Mammary epithelial cell (primary cell): ENCODE measurements at regions of chr12 and their contacts with region 1.

Region 1: DNA sequence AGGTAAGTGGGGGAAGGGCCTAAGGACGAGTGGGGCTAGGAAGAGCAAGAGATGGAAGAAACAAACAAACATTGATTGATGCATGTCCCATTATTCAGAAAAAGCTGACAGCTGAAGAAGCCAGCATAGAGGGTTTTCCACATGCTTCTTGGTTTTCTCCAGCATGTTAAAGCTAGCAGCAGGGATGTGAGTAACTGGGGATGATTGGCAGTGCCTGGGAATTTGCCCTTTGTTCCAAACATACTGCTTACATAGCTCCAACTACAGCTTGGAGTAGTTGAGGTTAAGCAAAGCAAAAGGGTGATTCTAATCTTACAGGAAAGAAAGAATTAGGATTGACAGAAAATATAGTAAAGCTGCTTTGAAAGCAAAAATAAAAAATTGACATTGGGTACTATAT is 68.0 kb upstream of the IFNG-AS1 start:
- DNase-seq: peak; percentile 63
- H3K4me3 ChIP-seq: no peak overlapping the region
- H3K27ac ChIP-seq: peak overlapping the region; percentile 28
- H3K4me1 ChIP-seq: peaks cover 37% of the 10 kb centered on the region
- H3K27me3 ChIP-seq: no peaks in the 10 kb centered on the region
- CTCF ChIP-seq: no peak

Region 2: GRCh38 chr12:67633708-67634107 is 287.6 kb before region 1 on chr12:
- CTCF ChIA-PET with region 1: interaction called, 16 read pairs
- dilution Hi-C with region 1: no loop called
- in situ Hi-C with region 1: no loop called
- intact Hi-C with region 1: no loop called
- DNase-seq: no peak
- H3K4me3 ChIP-seq: no peak overlapping the region
- H3K27ac ChIP-seq: no peak overlapping the region
- H3K4me1 ChIP-seq: no peaks in the 10 kb centered on the region
- H3K27me3 ChIP-seq: no peaks in the 10 kb centered on the region
- CTCF ChIP-seq: no peak